ENCODE measurements at regions of chr2 and their contacts with region 1.

Region 1: DNA sequence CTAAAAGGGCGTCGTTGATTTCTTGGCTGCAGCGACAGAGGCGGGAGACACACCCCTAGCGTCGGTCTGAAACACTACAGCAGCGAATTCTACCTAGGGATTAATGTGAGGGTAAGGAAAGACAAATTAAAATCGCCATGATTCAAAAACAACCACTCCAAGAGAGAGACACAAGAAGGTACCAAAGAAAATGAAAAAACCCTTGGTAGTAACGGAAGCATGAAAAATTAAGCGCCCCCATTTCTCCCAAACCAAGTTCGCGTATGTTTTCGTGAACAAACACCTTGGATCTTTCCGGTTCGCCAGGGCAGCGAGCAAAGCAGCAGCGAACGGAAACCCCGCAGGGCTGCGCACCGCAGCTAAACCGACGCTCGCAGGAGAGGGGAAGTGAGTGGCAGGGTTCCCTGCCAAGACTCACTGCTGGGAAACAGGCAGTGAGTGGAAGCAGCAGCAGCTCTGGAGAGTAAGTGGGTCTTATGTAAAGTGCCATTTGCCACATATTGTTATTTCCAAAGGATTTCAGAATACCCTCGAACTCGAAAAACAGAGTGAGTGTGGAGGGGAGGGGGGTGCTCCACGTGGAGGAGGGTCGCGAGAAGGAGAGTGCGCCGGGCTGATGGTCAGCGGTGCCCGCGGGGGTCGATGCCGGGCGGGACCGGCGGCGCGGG is 1.0 kb downstream of the PPP3R1 start:
- DNase-seq: peak; percentile 76
- ATAC-seq: peak; percentile 42
- H3K4me3 ChIP-seq: peak overlapping the region; percentile 98
- H3K27ac ChIP-seq: peak overlapping the region; percentile 96
- H3K4me1 ChIP-seq: peaks cover 17% of the 10 kb centered on the region
- H3K27me3 ChIP-seq: no peaks in the 10 kb centered on the region
- CTCF ChIP-seq: peak; percentile 71
- POLR2A ChIP-seq: peak; percentile 69
- RAD21 ChIP-seq: peak; percentile 60

Region 2: GRCh38 chr2:68157402-68158133 is 93.8 kb before region 1 on chr2 and contains the start of gene PNO1:
- CTCF ChIA-PET with region 1: no interaction called
- POLR2A ChIA-PET with region 1: no interaction called
- dilution Hi-C with region 1: no loop called
- in situ Hi-C with region 1: no loop called
- intact Hi-C with region 1: loop called (anchors 1 kb)
- DNase-seq: peak; percentile 95
- ATAC-seq: peak; percentile 98
- H3K4me3 ChIP-seq: peak within 1 kb of the TSS; percentile 75
- H3K27ac ChIP-seq: peak within 1 kb of the TSS; percentile 89
- H3K4me1 ChIP-seq: no peaks in the 10 kb centered on the region
- H3K27me3 ChIP-seq: no peaks in the 10 kb centered on the region
- CTCF ChIP-seq: no peak
- POLR2A ChIP-seq: peak; percentile 91
- RAD21 ChIP-seq: peak; percentile 11; the same call in 1 of the 2 replicates
- total RNA-seq, gene PNO1: 14.7 and 25.8 TPM in 2 replicates

Region 3: GRCh38 chr2:68178954-68179627 is 72.2 kb before region 1 on chr2:
- CTCF ChIA-PET with region 1: interaction called, 3 read pairs
- POLR2A ChIA-PET with region 1: no interaction called
- dilution Hi-C with region 1: no loop called
- in situ Hi-C with region 1: no loop called
- intact Hi-C with region 1: loop called (anchors 2 kb)
- DNase-seq: peak; percentile 44
- ATAC-seq: peak; percentile 82
- H3K4me3 ChIP-seq: no peak overlapping the region
- H3K27ac ChIP-seq: peak overlapping the region; percentile 77; the same call in 1 of the 2 replicates
- H3K4me1 ChIP-seq: peaks cover 6% of the 10 kb centered on the region
- H3K27me3 ChIP-seq: no peaks in the 10 kb centered on the region
- CTCF ChIP-seq: no peak
- POLR2A ChIP-seq: no peak
- RAD21 ChIP-seq: no peak

Region 4: DNA sequence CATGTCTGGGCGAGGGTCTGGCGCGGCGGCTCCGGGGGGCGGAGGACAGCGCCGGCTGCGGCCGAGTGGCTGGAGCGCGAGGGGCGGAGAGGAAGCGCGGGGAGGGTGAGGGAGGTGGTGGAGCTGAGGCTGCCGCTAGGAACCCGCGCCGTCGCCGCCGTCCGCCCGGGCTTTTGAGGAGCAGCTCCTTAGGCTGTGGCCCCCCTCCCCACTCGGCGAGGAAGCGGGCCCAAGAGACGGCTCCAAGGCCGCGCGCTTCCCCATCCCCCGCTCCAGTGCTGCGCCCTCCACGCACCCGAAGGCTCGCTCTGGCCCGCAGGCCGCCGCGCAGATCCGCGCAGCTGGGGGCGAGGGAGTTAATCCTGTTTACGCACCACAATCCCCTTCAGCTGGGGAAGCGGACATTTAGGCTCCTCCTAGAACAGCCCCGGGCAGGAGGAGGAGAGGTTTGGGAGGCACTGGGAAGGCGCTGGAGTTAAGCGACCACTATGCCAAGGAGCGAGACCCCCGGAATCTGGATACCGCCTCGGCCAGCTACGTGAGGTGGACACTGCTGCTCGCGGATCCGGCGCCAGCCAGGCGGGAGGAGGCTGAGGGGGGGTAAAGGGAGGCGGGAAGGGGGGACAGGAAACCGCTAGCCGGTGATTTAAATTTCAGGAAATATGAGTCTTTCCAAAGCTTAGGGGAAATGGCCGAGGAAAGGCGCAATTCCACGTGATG is 68.2 kb after region 1 on chr2 and contains the start of gene CNRIP1:
- CTCF ChIA-PET with region 1: no interaction called
- POLR2A ChIA-PET with region 1: interaction called, 6 read pairs
- dilution Hi-C with region 1: no loop called
- in situ Hi-C with region 1: no loop called
- intact Hi-C with region 1: loop called (anchors 2 kb)
- DNase-seq: peak; percentile 83
- ATAC-seq: peak; percentile 77
- H3K4me3 ChIP-seq: peak within 1 kb of the TSS; percentile 87
- H3K27ac ChIP-seq: peak within 1 kb of the TSS; percentile 98
- H3K4me1 ChIP-seq: no peaks in the 10 kb centered on the region
- H3K27me3 ChIP-seq: no peaks in the 10 kb centered on the region
- CTCF ChIP-seq: no peak
- POLR2A ChIP-seq: no peak
- RAD21 ChIP-seq: no peak
- total RNA-seq, gene CNRIP1: 23.3 and 25.6 TPM in 2 replicates